GM13977 (cell line): ENCODE measurements at regions of chr17 and their contacts with region 1.

Region 1: DNA sequence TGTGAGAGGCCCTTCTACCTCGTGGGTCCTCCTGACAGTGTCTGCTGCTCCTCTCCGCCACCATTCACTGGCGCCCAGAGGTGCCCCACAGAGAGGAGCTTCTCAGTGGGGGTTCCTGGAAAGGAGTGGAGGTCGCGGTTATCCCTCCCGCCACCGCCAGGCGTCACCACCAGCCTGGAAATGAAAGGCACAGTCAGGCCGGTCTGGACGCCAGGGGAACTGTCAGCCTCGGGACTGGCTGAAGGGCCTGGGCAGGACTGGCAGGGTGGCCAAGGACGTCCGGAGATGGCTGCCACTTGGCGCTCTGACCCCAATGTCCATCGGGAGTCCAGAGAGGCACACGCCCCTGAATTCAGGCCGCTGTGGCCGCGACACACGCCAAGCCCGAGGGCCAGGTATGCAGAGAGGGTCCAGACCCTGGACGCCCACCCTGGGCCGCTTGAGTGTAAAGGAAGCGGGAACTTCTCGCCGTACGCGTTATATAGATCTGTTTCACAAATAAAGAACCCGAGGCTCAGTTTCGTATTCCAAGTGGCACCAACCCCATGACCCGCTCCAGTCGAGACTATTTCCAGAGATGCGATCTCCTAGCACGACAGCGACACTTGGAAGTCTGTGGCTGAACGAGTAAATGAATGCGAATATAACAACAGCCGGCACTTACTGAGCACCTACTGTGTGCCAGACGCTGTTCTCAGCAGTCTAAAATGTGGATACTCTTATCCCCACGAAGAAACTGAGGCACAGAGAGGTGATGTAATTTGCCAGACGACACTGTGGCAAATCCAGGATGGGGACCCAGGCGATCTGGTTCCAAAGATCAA is 7.6 kb upstream of the NXPH3 start:
- DNase-seq: peak; percentile 81
- CTCF ChIP-seq: peak; percentile 99

Region 2: GRCh38 chr17:49494937-49495841 is 72.9 kb before region 1 on chr17 and contains the start of gene NGFR:
- in situ Hi-C with region 1: no loop called
- DNase-seq: peak; percentile 92
- CTCF ChIP-seq: peak; percentile 45

Region 3: GRCh38 chr17:49843774-49844350 is 275.8 kb after region 1 on chr17:
- in situ Hi-C with region 1: loop called (anchors 25 kb)
- DNase-seq: no peak
- CTCF ChIP-seq: peak; percentile 51